ENCODE measurements at regions of chr20 and their contacts with region 1.

Region 1: GRCh38 chr20:31837896-31838397 is 7.5 kb downstream of the FOXS1 start:
- DNase-seq: no peak
- H3K4me3 ChIP-seq: no peak overlapping the region
- H3K27ac ChIP-seq: no peak overlapping the region
- H3K4me1 ChIP-seq: no peaks in the 10 kb centered on the region
- H3K27me3 ChIP-seq: no peaks in the 10 kb centered on the region
- CTCF ChIP-seq: no peak

Region 2: GRCh38 chr20:31473331-31474096 is 364.4 kb before region 1 on chr20:
- CTCF ChIA-PET with region 1: no interaction called
- POLR2A ChIA-PET with region 1: interaction called, 11 read pairs
- intact Hi-C with region 1: no loop called
- DNase-seq: no peak
- H3K4me3 ChIP-seq: no peak overlapping the region
- H3K27ac ChIP-seq: no peak overlapping the region
- H3K4me1 ChIP-seq: no peaks in the 10 kb centered on the region
- H3K27me3 ChIP-seq: peaks cover 36% of the 10 kb centered on the region
- CTCF ChIP-seq: no peak

Measured in A673 (cell line).